CD8-positive, alpha-beta memory T cell (primary cell): ENCODE measurements at regions of chr14 and their contacts with region 1.

Region 1: GRCh38 chr14:65824285-65824977 is 411.9 kb downstream of the FUT8 start:
- DNase-seq: peak; percentile 20 to 72 (median 53)
- H3K4me3 ChIP-seq: no peak overlapping the region
- H3K4me3 Mint-ChIP-seq: peak overlapping the region in 2 of 7 donors; percentile 2 to 53
- H3K27ac ChIP-seq: no peak overlapping the region
- H3K27ac Mint-ChIP-seq: peak overlapping the region in 2 of 8 donors; percentile 5 to 48
- H3K4me1 ChIP-seq: peaks cover 7% of the 10 kb centered on the region
- H3K4me1 Mint-ChIP-seq: peaks cover 8 to 14% (median 12%) of the 10 kb centered on the region in 3 donors
- H3K27me3 ChIP-seq: no peaks in the 10 kb centered on the region
- H3K27me3 Mint-ChIP-seq: peaks cover 0 to 2% of the 10 kb centered on the region in 2 donors

Region 2: GRCh38 chr14:65412032-65412846 is 412.2 kb before region 1 on chr14 and contains the start of gene FUT8:
- CTCF ChIA-PET with region 1: interaction called, 52 read pairs
- POLR2A ChIA-PET with region 1: interaction called, 5 read pairs
- DNase-seq: peak; percentile 93 to 98 (median 94)
- H3K4me3 ChIP-seq: peak within 1 kb of the TSS; percentile 89
- H3K4me3 Mint-ChIP-seq: peak within 1 kb of the TSS; percentile 94 to 99 (median 97)
- H3K27ac ChIP-seq: peak within 1 kb of the TSS; percentile 80
- H3K27ac Mint-ChIP-seq: peak within 1 kb of the TSS; percentile 83 to 99 (median 96)
- H3K4me1 ChIP-seq: peaks cover 19% of the 10 kb centered on the region
- H3K4me1 Mint-ChIP-seq: peaks cover 39 to 53% (median 46%) of the 10 kb centered on the region in 3 donors
- H3K27me3 ChIP-seq: no peaks in the 10 kb centered on the region
- H3K27me3 Mint-ChIP-seq: no peaks in the 10 kb centered on the region
- total RNA-seq, gene FUT8: 76.0 to 81.7 TPM

Region 3: DNA sequence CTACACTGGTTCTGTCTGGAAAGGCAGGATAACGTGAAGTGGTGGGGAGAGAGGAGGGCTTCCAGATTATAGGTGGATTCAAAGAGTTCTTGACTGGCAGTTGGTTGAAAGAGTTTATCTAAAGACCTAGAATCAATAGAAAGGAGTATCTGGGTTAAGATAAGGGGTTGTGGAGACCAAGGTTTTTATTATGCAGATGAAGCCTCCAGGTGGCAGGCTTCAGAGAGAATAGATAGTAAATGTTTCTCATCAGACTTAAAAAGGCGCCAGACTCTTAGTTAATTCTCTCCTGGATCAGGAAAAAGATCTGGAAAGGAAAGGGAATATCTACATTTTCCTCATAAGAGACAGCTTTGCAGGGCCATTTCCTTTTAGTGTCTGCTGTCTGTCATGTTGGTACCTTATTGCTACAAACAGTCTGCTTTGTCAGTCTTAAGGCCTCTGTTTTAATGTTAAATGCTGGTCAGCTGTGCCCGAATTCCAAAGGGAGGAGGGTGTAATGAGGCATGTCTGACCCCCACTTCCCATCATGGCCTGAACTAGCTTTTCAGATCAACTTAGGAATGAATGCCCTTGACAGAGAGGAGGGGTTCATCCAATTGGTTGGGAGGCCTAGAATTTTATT is 10.6 kb before region 1 on chr14:
- CTCF ChIA-PET with region 1: interaction called, 14 read pairs
- POLR2A ChIA-PET with region 1: no interaction called
- DNase-seq: no peak
- H3K4me3 ChIP-seq: no peak overlapping the region
- H3K4me3 Mint-ChIP-seq: no peak overlapping the region
- H3K27ac ChIP-seq: no peak overlapping the region
- H3K27ac Mint-ChIP-seq: no peak overlapping the region
- H3K4me1 ChIP-seq: no peaks in the 10 kb centered on the region
- H3K4me1 Mint-ChIP-seq: peaks cover 0 to 5% (median 0%) of the 10 kb centered on the region in 3 donors
- H3K27me3 ChIP-seq: no peaks in the 10 kb centered on the region
- H3K27me3 Mint-ChIP-seq: peaks cover 0 to 4% of the 10 kb centered on the region in 2 donors

Region 4: GRCh38 chr14:65847075-65847847 is 22.8 kb after region 1 on chr14:
- CTCF ChIA-PET with region 1: interaction called, 24 read pairs
- POLR2A ChIA-PET with region 1: interaction called, 5 read pairs
- DNase-seq: peak; percentile 45 to 93 (median 87)
- H3K4me3 ChIP-seq: peak overlapping the region; percentile 51
- H3K4me3 Mint-ChIP-seq: peak overlapping the region; percentile 41 to 85 (median 78)
- H3K27ac ChIP-seq: peak overlapping the region; percentile 28
- H3K27ac Mint-ChIP-seq: peak overlapping the region; percentile 83 to 99 (median 91)
- H3K4me1 ChIP-seq: peaks cover 91% of the 10 kb centered on the region
- H3K4me1 Mint-ChIP-seq: peaks cover 67 to 91% (median 89%) of the 10 kb centered on the region in 3 donors
- H3K27me3 ChIP-seq: no peaks in the 10 kb centered on the region
- H3K27me3 Mint-ChIP-seq: no peaks in the 10 kb centered on the region

Region 5: GRCh38 chr14:65860956-65861611 is 36.7 kb after region 1 on chr14:
- CTCF ChIA-PET with region 1: interaction called, 12 read pairs
- POLR2A ChIA-PET with region 1: interaction called, 3 read pairs
- DNase-seq: peak in 2 of 5 donors; percentile 16 to 57
- H3K4me3 ChIP-seq: no peak overlapping the region
- H3K4me3 Mint-ChIP-seq: peak overlapping the region in 5 of 7 donors; percentile 0 to 59 (median 32)
- H3K27ac ChIP-seq: no peak overlapping the region
- H3K27ac Mint-ChIP-seq: peak overlapping the region in 5 of 8 donors; percentile 10 to 73 (median 24)
- H3K4me1 ChIP-seq: peaks cover 49% of the 10 kb centered on the region
- H3K4me1 Mint-ChIP-seq: peaks cover 47 to 58% (median 56%) of the 10 kb centered on the region in 3 donors
- H3K27me3 ChIP-seq: no peaks in the 10 kb centered on the region
- H3K27me3 Mint-ChIP-seq: peaks cover 0 to 2% of the 10 kb centered on the region in 2 donors

Region 6: GRCh38 chr14:65927931-65928356 is 103.5 kb after region 1 on chr14:
- CTCF ChIA-PET with region 1: interaction called, 17 read pairs
- POLR2A ChIA-PET with region 1: no interaction called
- DNase-seq: peak; percentile 44 to 84 (median 67)
- H3K4me3 ChIP-seq: peak overlapping the region; percentile 47
- H3K4me3 Mint-ChIP-seq: peak overlapping the region; percentile 18 to 90 (median 70)
- H3K27ac ChIP-seq: peak overlapping the region; percentile 16
- H3K27ac Mint-ChIP-seq: peak overlapping the region; percentile 73 to 98 (median 86)
- H3K4me1 ChIP-seq: peaks cover 53% of the 10 kb centered on the region
- H3K4me1 Mint-ChIP-seq: peaks cover 67 to 82% (median 77%) of the 10 kb centered on the region in 3 donors
- H3K27me3 ChIP-seq: no peaks in the 10 kb centered on the region
- H3K27me3 Mint-ChIP-seq: peaks cover 0 to 1% of the 10 kb centered on the region in 2 donors

Region 7: DNA sequence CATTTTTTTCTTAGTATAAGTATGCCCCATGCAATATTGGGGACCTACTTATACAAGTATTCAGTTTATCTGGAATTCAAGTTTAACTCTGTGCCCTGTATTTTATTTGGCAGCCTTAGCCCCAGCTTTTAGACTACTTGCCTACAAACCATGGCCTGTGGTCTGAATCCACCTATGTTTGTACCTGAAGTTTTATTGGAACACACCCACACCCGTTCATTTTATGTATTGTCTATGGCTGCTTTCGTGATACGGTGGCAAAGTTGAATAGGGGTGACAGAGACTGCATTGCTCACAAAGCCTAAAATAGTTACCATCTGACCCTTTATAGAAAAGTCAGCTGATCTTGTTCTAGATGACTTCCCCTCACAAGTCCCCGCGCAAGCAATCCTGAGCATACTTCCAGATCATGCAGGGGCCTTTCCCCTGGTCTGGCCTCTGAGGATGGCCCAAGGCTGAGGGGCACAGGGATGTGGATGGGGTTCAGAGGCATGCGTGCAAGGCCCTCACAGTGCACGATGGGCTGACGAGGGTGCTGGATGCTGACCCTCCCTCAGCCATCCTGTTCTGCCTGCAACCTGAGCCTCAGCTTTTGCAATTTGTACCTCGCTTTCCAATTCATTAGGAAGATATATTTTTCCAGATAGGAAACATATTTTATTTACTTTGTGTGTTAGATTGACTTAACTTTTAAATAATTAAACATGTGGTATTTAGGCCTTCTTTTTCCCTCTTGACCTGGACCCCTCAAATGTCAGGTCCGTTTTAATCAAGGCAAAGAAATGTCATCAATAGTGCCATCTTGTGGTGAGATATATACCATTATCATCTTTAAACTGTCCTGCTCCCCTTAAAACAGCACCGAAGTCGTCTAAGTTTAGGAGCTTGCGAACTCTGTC is 134.5 kb after region 1 on chr14:
- CTCF ChIA-PET with region 1: interaction called, 69 read pairs
- POLR2A ChIA-PET with region 1: interaction called, 5 read pairs
- DNase-seq: peak in 2 of 5 donors; percentile 22 to 46
- H3K4me3 ChIP-seq: no peak overlapping the region
- H3K4me3 Mint-ChIP-seq: no peak overlapping the region
- H3K27ac ChIP-seq: no peak overlapping the region
- H3K27ac Mint-ChIP-seq: no peak overlapping the region
- H3K4me1 ChIP-seq: peaks cover 16% of the 10 kb centered on the region
- H3K4me1 Mint-ChIP-seq: peaks cover 25% of the 10 kb centered on the region in 3 donors
- H3K27me3 ChIP-seq: no peaks in the 10 kb centered on the region
- H3K27me3 Mint-ChIP-seq: no peaks in the 10 kb centered on the region